Activated CD8-positive, alpha-beta T cell treated with anti-CD3 and anti-CD28 coated beads, Interleukin-2, amount 10 ng/mL, durations not matched to agents 7 days and 5 days (primary cell): ENCODE measurements at regions of chr20 and their contacts with region 1.

Region 1: GRCh38 chr20:3679749-3680700 is 1.8 kb downstream of the ADAM33 start:
- DNase-seq: no peak
- ATAC-seq: no peak
- H3K4me3 Mint-ChIP-seq: no peak overlapping the region
- H3K27ac Mint-ChIP-seq: no peak overlapping the region
- H3K4me1 Mint-ChIP-seq: no peaks in the 10 kb centered on the region
- H3K27me3 Mint-ChIP-seq: peaks cover 61% of the 10 kb centered on the region

Region 2: GRCh38 chr20:3557237-3557785 is 122.7 kb before region 1 on chr20:
- CTCF ChIA-PET with region 1: interaction called, 12 read pairs
- POLR2A ChIA-PET with region 1: no interaction called
- DNase-seq: no peak
- ATAC-seq: no peak
- H3K4me3 Mint-ChIP-seq: no peak overlapping the region
- H3K27ac Mint-ChIP-seq: no peak overlapping the region
- H3K4me1 Mint-ChIP-seq: peaks cover 3% of the 10 kb centered on the region
- H3K27me3 Mint-ChIP-seq: no peaks in the 10 kb centered on the region

Region 3: GRCh38 chr20:3663031-3663701 is 16.9 kb before region 1 on chr20 and contains the start of gene GFRA4:
- CTCF ChIA-PET with region 1: interaction called, 49 read pairs
- POLR2A ChIA-PET with region 1: no interaction called
- DNase-seq: no peak
- ATAC-seq: no peak
- H3K4me3 Mint-ChIP-seq: no peak within 1 kb of the TSS
- H3K27ac Mint-ChIP-seq: no peak within 1 kb of the TSS
- H3K4me1 Mint-ChIP-seq: peaks cover 45% of the 10 kb centered on the region
- H3K27me3 Mint-ChIP-seq: peaks cover 67% of the 10 kb centered on the region
- total RNA-seq, gene GFRA4: not detected

Region 4: GRCh38 chr20:3753098-3753980 is 73.3 kb after region 1 on chr20:
- CTCF ChIA-PET with region 1: interaction called, 11 read pairs
- POLR2A ChIA-PET with region 1: no interaction called
- DNase-seq: peak; percentile 72
- ATAC-seq: peak; percentile 71
- H3K4me3 Mint-ChIP-seq: no peak overlapping the region
- H3K27ac Mint-ChIP-seq: no peak overlapping the region
- H3K4me1 Mint-ChIP-seq: peaks cover 4% of the 10 kb centered on the region
- H3K27me3 Mint-ChIP-seq: no peaks in the 10 kb centered on the region

Region 5: DNA sequence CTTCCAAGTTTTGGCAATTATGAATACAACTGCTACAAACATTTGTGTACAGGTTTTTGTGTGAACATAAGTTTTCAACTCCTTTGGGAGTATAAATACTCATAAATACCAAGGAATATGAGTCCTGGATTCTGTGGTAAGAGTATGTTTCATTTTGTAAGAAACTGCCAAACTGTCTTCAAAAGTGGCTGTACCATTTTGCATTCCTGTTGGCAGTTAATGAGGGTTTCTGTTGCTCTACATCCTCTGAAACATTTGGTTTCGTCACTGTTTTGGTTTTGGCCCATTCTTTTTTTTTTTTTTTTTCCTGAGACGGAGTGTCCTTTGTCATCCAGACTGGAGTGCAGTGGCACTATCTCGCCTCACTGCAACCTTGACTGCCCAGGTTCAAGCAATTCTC is 148.8 kb after region 1 on chr20:
- CTCF ChIA-PET with region 1: no interaction called
- POLR2A ChIA-PET with region 1: no interaction called
- DNase-seq: no peak
- ATAC-seq: no peak
- H3K4me3 Mint-ChIP-seq: no peak overlapping the region
- H3K27ac Mint-ChIP-seq: no peak overlapping the region
- H3K4me1 Mint-ChIP-seq: peaks cover 6% of the 10 kb centered on the region
- H3K27me3 Mint-ChIP-seq: no peaks in the 10 kb centered on the region

Region 6: GRCh38 chr20:3854462-3854871 is 174.4 kb after region 1 on chr20:
- CTCF ChIA-PET with region 1: interaction called, 13 read pairs
- POLR2A ChIA-PET with region 1: no interaction called
- DNase-seq: no peak
- ATAC-seq: peak; percentile 28
- H3K4me3 Mint-ChIP-seq: no peak overlapping the region
- H3K27ac Mint-ChIP-seq: no peak overlapping the region
- H3K4me1 Mint-ChIP-seq: peaks cover 5% of the 10 kb centered on the region
- H3K27me3 Mint-ChIP-seq: no peaks in the 10 kb centered on the region

Region 7: GRCh38 chr20:3901028-3901705 is 221.1 kb after region 1 on chr20:
- CTCF ChIA-PET with region 1: no interaction called
- POLR2A ChIA-PET with region 1: no interaction called
- DNase-seq: no peak
- ATAC-seq: no peak
- H3K4me3 Mint-ChIP-seq: peak overlapping the region; percentile 28
- H3K27ac Mint-ChIP-seq: peak overlapping the region; percentile 16
- H3K4me1 Mint-ChIP-seq: peaks cover 48% of the 10 kb centered on the region
- H3K27me3 Mint-ChIP-seq: no peaks in the 10 kb centered on the region